MCF 10A (cell line): ENCODE measurements at regions of chr3 and their contacts with region 1.

Region 1: DNA sequence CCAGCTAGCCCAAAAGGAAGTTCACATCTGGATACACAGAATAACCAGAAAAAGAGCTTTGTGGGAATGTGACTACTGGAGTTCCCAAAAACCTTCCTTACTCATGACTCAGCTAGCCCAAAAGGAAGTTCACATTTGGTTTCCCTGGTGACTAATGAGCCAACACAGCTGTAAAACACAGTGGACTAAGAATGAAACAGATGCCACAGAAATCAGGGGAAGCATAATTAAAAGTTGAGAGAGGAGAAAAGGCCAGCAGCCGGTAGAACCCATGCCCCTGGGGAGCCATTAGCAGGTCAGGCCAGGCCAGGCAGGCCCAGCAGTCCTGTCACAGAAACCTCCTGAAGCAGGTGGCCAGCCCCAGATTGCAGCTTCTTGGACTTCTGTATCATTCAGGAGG is 130.3 kb downstream of the GHSR start:
- DNase-seq: peak; percentile 79
- H3K4me3 Mint-ChIP-seq: peak overlapping the region; percentile 1
- H3K27ac Mint-ChIP-seq: peak overlapping the region; percentile 83
- H3K4me1 Mint-ChIP-seq: peaks cover 28% of the 10 kb centered on the region
- H3K27me3 Mint-ChIP-seq: no peaks in the 10 kb centered on the region
- CTCF ChIP-seq: no peak

Region 2: DNA sequence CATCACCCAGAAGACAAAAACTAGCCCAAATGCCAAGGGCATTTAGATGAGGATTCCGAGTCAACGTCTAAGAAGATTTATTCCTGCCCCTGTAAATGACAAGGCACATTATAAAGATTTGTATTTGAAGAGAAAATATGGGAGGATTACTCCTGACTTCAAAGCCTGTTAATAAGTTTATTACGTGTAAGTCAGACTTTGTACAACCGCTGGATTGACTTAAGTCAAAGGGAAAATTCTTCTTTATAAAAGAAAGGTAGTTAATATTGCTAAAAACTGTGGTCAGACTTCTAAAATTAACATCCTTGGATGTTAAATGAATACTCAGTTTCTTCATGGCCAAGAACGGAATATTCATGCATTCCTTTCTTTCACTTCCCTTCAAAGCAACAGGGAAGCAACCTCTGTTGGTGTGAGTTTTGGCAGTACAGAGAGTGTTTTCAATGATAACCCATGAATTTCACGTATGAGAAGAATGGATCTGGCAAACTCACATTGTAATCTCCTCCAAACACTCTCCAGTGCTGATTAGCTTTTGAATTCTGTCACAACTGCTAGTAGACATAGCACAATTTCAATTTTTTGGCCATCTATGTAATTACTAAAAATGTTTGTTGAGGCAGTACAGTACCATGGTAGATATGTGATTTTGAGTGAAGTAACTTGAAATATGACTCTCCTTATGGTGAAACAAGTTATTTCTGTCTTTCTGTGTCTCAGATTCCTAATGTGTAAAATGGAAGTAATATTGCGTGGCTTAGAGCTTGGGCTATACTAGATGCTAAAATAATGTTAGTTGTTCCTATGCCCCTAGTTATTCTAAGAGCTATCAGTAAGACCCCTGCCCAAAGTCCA is 569.7 kb before region 1 on chr3:
- CTCF ChIA-PET with region 1: no interaction called
- POLR2A ChIA-PET with region 1: no interaction called
- intact Hi-C with region 1: no loop called
- DNase-seq: no peak
- H3K4me3 Mint-ChIP-seq: no peak overlapping the region
- H3K27ac Mint-ChIP-seq: no peak overlapping the region
- H3K4me1 Mint-ChIP-seq: no peaks in the 10 kb centered on the region
- H3K27me3 Mint-ChIP-seq: no peaks in the 10 kb centered on the region
- CTCF ChIP-seq: no peak

Region 3: DNA sequence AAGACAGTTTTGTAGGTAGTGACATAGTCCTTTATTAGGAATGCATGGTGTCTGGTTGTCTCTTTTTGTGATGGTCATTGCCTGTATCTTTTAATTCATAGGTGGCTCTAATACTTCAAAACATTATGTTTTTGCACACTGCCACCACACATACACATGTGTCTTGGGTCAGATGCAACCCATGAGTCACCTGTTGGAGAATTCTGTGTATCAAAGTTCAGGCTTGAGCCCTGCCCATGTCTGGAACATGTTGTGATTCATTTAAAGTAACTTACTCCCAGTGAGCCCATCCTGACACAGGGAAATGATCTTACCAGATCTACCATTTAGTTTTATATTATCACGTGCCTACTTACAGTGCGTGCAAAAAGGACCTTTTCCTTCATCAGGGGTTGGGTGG is 12.4 kb before region 1 on chr3:
- CTCF ChIA-PET with region 1: interaction called, 6 read pairs
- POLR2A ChIA-PET with region 1: interaction called, 12 read pairs
- intact Hi-C with region 1: no loop called
- DNase-seq: peak; percentile 86
- H3K4me3 Mint-ChIP-seq: no peak overlapping the region
- H3K27ac Mint-ChIP-seq: peak overlapping the region; percentile 59
- H3K4me1 Mint-ChIP-seq: peaks cover 32% of the 10 kb centered on the region
- H3K27me3 Mint-ChIP-seq: no peaks in the 10 kb centered on the region
- CTCF ChIP-seq: no peak